ENCODE measurements at regions of chr17 and their contacts with region 1.

Region 1: DNA sequence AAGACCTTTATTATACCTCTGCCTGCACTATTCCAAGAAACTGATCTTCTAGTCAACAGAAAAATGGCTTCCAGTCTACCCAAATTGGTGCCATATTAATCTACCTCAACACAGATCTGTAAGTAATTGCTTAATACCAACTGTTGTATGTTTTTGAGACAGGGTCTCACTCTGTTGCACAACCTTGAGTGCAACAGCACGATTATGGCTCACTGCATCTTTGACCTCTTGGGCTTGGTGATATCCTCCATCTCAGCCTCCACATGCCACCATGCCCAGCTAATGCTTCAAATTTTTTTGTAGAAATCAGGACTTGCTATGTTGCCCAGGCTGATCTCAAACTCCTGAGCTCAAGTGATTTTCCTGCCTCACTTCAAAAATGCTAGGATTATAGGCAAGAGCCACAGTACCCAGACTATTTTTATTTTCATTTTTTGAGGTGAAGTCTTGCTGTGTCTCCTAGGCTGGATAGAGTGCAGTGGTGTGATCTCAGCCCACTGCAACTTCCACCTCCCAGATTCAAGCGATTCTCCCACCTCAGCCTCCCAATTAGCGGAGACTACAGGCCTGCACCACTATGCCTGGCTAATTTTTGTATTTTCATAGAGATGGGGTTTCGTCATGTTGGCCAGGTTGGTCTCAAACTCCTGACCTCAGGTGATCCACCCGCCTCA is 14.4 kb downstream of the NUFIP2 start:
- DNase-seq: no peak
- H3K4me3 Mint-ChIP-seq: no peak overlapping the region
- H3K27ac Mint-ChIP-seq: no peak overlapping the region
- H3K4me1 Mint-ChIP-seq: peaks cover 39% of the 10 kb centered on the region
- H3K27me3 Mint-ChIP-seq: no peaks in the 10 kb centered on the region

Region 2: DNA sequence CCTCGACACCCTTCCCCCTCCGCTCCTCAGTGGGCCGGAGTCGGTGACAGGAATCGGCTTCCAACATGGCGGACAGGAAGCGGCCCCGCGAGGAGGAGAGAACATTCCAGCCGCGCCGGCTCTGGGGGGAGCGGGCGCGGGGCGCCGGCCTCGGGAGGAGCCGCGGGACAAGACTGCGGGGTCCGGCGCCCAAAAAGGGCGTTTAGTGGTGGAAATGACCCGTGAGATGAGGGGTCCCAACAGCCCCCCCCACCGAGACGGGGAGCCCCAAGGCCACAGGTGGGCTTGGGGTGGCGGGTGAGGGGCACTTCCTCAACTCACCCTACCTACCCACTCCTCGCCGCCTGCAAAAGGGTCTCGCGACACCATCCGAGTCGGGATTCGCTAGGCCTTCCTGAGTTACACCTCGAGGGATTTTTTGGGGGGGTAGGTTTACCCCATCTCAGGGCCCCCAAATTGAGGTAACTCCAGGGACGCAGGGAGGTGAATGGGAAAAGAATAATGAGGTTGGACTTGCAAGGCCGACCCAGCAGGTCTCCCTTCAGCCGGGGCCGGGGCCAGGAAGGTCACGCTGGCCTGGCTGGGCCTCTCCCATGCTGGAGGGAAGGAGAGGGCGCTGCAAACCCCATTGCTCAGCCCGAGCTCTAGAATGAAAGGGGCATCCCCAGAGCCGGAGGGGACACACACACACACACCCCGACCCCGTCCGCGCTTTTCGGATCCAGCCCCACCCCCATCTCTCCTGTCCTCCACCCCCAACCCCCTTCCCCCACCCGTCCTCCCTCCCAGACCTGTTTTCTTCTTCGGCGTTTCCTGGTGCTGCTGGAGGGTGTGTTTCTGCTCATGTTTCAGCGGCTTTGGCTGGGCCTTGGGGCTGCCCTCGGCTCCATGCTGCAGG is 13.7 kb after region 1 on chr17:
- CTCF ChIA-PET with region 1: interaction called, 26 read pairs
- POLR2A ChIA-PET with region 1: interaction called, 3 read pairs
- DNase-seq: peak; percentile 62
- H3K4me3 Mint-ChIP-seq: peak overlapping the region; percentile 97
- H3K27ac Mint-ChIP-seq: peak overlapping the region; percentile 99
- H3K4me1 Mint-ChIP-seq: peaks cover 38% of the 10 kb centered on the region
- H3K27me3 Mint-ChIP-seq: no peaks in the 10 kb centered on the region

Measured in activated CD4-positive, alpha-beta T cell treated with anti-CD3 and anti-CD28 coated beads, Interleukin-2, amount 10 ng/mL, durations not matched to agents 7 days and 5 days (primary cell).